ENCODE measurements at regions of chr3 and their contacts with region 1.

Region 1: DNA sequence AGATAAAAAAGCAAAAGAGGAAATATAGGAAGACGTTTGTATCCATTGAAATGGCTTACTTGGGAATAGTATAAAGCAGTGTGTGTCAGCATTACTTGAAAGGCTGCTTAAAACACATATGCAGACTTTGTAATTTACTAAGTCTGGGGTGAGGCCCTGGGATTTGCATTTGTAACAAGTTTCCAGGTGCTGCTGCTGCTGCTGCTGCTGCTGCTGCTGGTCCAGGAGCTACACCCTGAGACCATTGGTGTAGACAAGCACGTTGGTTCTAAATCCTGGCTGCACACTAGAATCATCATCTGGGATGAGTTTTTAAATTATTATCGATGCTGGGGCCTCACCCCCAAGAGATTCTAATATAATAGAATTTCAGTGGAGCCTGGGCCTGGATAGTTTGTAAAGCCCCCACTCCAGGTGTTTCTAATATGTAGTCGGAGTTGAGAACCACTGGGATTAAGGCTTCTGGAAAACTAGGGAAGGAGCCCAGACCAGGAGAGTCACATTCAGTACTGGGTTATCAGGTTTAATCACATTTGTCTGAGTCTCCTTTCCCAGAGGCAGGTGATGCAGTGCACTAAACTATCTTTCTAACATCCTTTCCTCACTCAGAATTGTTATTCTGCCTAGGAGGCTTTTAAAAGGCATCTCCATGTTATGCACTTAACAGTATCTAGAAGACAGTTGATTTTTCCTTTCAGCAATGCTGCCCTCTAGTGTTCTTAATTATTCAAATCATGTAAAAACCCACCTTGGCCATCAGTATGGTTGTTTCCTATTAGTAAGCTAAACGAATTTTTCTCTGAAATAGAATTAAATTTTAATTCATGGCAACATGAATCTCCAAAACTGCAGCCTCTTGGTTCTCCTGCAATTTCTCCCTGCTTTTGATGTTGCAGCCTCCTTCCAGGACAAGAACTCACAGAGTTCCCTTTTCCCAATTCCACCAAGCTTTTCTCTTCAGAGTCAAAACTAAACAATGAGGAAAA is 45.4 kb downstream of the SSR3 start:
- DNase-seq: no peak
- H3K4me3 Mint-ChIP-seq: no peak overlapping the region
- H3K27ac Mint-ChIP-seq: no peak overlapping the region
- H3K4me1 Mint-ChIP-seq: peaks cover 14% of the 10 kb centered on the region
- H3K27me3 Mint-ChIP-seq: peaks cover 20% of the 10 kb centered on the region

Region 2: GRCh38 chr3:156040041-156040440 is 469.4 kb before region 1 on chr3:
- intact Hi-C with region 1: loop called (anchors 10 kb)
- DNase-seq: no peak
- H3K4me3 Mint-ChIP-seq: no peak overlapping the region
- H3K27ac Mint-ChIP-seq: no peak overlapping the region
- H3K4me1 Mint-ChIP-seq: no peaks in the 10 kb centered on the region
- H3K27me3 Mint-ChIP-seq: peaks cover 6% of the 10 kb centered on the region

Region 3: DNA sequence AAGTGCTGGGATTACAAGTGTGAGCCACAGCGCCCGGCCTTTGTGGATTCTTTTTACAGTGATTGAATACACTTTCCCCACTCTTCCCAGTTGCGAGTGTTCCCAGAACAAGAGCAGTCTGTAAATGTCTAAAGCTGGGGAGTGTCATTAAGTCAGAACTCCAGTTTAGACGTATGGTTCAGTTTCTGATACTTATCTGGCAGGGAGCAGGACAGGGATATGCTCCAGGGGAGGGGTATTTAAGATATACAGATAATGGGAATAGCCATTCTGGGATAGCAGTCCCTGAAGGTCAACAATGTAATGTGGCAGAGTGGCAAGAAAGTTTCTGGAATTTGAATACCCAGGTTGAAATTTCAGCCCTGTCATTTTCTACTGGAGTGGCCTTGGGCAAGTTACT is 118.6 kb before region 1 on chr3:
- intact Hi-C with region 1: loop called (anchors 5 kb)
- DNase-seq: no peak
- H3K4me3 Mint-ChIP-seq: no peak overlapping the region
- H3K27ac Mint-ChIP-seq: no peak overlapping the region
- H3K4me1 Mint-ChIP-seq: no peaks in the 10 kb centered on the region
- H3K27me3 Mint-ChIP-seq: peaks cover 23% of the 10 kb centered on the region

Region 4: DNA sequence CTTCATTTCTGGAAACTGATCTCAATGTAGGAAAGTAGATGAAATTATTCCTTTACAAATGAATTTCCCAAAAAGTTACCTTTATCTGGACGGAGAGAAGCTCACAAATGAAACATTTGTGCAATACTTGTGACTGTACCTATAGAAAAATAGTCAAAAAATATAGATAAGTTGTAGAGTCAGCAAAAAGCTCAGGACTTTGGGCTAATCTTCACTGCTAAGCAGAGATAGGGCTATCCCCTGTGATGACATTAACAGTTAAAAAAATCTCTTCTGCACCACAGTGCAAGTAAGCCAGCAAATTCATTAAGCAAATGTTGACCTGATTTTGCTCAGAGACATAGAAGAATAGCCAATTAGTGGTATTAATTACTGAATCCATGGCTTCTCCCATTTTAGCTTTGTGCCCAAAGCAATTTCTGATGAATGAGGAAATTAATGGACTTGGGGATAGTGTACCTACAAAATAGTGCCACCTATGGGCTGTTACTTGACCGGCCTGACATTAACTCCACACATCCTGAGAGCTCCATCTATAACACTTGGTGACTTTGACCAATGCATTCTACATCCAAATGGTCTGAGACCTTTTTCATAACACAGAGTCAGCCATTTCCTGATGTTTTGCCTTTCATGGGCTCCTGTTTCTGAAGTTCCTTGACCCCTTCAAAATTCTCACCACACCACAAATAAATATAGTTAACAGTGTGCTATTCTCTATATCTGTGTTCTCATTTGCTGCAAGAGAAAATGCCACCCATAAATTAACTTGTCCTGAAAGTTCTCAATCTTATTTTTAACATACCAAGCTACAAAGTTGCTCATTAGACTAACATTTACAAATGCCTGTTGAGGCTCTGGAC is 59.5 kb before region 1 on chr3:
- intact Hi-C with region 1: loop called (anchors 1 kb)
- DNase-seq: no peak
- H3K4me3 Mint-ChIP-seq: no peak overlapping the region
- H3K27ac Mint-ChIP-seq: no peak overlapping the region
- H3K4me1 Mint-ChIP-seq: no peaks in the 10 kb centered on the region
- H3K27me3 Mint-ChIP-seq: peaks cover 35% of the 10 kb centered on the region

Region 5: DNA sequence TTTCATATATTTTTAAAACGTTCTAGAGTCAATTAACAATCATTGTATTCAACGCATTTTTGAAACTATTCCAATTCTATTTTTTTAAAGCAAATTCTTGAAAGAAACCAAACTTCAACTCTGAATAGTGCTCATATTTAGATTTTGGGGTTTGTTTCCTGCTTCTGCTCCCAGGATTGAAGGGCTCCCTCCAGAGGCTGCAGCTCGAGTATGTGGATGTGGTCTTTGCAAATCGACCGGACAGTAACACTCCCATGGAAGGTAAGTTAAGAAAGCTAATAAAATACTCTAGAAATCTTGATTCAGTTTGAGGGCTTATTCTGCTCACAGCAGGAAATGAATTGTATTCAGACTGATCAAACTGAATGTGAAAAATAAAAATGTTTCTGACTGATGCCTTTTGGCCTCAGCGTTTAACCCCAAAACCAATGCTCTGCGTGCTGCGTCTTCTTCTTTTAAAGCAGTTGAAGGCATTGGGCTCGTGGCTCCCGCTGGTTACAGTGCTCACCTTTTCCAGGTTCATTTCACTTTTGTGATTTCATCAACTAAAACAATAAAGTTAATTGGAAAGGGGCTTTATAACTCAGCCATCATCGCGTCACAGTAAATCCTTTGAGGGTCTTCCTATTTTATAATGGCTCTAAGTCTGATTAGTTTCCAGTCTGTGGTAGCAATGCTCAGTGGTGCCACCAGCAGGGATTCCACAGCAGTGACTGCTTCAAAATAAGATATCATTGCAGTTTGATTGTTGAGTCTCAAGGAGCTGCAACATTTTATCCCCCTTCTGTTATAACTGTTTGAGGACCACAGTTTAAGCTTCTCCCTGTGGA is 34.7 kb before region 1 on chr3:
- intact Hi-C with region 1: loop called (anchors 5 kb)
- DNase-seq: no peak
- H3K4me3 Mint-ChIP-seq: no peak overlapping the region
- H3K27ac Mint-ChIP-seq: no peak overlapping the region
- H3K4me1 Mint-ChIP-seq: no peaks in the 10 kb centered on the region
- H3K27me3 Mint-ChIP-seq: peaks cover 55% of the 10 kb centered on the region

Region 6: GRCh38 chr3:156519758-156520162 is 10.3 kb after region 1 on chr3:
- intact Hi-C with region 1: loop called (anchors 1 kb)
- DNase-seq: no peak
- H3K4me3 Mint-ChIP-seq: no peak overlapping the region
- H3K27ac Mint-ChIP-seq: no peak overlapping the region
- H3K4me1 Mint-ChIP-seq: peaks cover 34% of the 10 kb centered on the region
- H3K27me3 Mint-ChIP-seq: peaks cover 32% of the 10 kb centered on the region